ENCODE measurements at regions of chr9 and their contacts with region 1.

Region 1: DNA sequence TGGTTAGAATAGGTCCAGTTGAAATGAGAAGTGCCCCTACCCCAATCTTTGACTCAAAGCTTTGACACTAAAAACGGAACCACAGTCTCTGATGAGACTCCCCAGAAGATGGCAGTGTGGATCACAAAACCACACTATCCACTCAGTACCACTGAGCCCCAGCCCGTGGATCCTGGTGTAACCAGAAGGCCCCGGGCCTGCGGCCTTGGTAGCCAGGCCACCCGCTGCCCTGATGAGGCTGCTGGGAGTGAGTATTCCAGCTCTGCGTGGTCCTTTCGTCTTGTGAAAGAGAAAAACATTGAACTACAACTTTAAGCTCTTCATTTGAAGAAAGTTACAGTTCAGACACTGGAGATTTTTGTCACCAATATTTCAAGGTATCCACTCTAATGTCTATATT is 42.2 kb upstream of the FBP1 start:
- DNase-seq: peak; percentile 88
- H3K27ac ChIP-seq: no peak overlapping the region
- CTCF ChIP-seq: peak; percentile 94

Region 2: DNA sequence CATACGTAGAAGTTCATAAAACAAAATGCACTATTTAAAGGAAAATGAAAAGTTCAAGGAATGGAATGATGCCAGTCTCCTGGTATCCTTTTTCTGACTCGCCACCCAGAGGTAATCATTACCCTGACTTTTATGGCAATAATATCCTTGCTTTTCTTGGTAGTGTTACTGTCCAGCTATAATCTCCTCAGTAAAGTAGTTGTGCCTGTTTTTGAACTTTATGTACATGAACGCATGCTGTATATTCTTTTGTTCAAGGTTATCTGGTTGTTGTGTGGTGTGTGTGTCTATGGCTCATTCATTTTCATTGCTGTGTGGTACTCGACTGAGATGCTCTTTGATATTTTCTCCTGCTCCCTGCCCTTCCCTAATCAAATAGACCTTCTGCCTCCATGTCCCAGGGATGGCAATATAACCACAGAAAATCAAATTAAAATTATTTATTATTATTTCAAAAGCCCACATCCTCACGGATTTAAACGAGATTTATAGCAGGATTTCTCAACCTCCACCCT is 13.0 kb before region 1 on chr9:
- CTCF ChIA-PET with region 1: interaction called, 17 read pairs
- POLR2A ChIA-PET with region 1: no interaction called
- DNase-seq: no peak
- H3K27ac ChIP-seq: no peak overlapping the region
- CTCF ChIP-seq: no peak

Region 3: GRCh38 chr9:94697972-94698581 is 16.6 kb after region 1 on chr9:
- CTCF ChIA-PET with region 1: interaction called, 21 read pairs
- POLR2A ChIA-PET with region 1: no interaction called
- DNase-seq: no peak
- H3K27ac ChIP-seq: no peak overlapping the region
- CTCF ChIP-seq: no peak

Region 4: GRCh38 chr9:94726495-94727191 is 45.1 kb after region 1 on chr9 and contains the start of gene AOPEP:
- CTCF ChIA-PET with region 1: interaction called, 15 read pairs
- POLR2A ChIA-PET with region 1: no interaction called
- DNase-seq: peak; percentile 100
- H3K27ac ChIP-seq: peak within 1 kb of the TSS; percentile 69
- CTCF ChIP-seq: no peak

Region 5: DNA sequence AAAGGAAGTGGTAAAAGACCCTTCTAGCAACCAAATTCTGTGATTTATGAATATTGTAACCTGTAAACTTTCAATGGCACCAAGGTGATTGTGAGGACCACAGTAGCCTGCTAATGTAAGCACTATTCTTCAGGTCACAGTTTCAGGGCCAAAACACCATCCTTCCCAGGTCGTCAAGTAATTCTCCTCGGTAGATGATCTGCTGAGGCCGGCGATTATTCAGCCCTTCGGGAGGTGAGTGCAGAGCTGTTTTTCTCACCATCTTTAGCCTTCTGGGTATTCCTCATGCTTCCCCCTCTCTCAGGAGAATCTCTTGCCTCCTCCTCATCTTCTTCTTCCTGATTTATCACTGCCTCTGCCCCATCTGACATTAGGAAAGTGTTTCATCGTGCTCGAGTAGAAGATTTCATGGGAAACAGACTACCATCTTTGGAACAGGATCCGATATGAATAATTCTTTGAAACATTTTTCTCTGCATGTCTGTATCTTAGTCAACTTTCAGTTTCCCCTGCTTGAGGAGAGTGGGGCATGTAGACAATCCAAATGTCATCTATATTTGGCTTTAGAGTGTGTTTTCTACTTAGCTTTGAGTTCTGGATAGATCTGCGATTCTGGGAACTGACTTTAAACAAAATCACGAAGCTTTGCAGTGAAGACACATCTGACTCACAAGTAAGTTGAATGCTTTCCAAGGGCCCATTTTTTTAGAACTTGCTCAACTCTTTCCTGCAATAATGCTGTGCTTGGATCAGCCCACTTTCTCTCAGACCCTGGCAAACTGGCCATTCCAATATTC is 218.9 kb after region 1 on chr9:
- CTCF ChIA-PET with region 1: no interaction called
- POLR2A ChIA-PET with region 1: no interaction called
- DNase-seq: peak; percentile 81
- H3K27ac ChIP-seq: peak overlapping the region; percentile 91
- CTCF ChIP-seq: no peak

Region 6: GRCh38 chr9:95127249-95128176 is 446.0 kb after region 1 on chr9:
- CTCF ChIA-PET with region 1: interaction called, 132 read pairs
- POLR2A ChIA-PET with region 1: no interaction called
- DNase-seq: peak; percentile 91
- H3K27ac ChIP-seq: peak overlapping the region; percentile 58
- CTCF ChIP-seq: peak; percentile 100

Region 7: GRCh38 chr9:95167998-95168397 is 486.5 kb after region 1 on chr9:
- CTCF ChIA-PET with region 1: interaction called, 11 read pairs
- POLR2A ChIA-PET with region 1: no interaction called
- DNase-seq: peak; percentile 75
- H3K27ac ChIP-seq: no peak overlapping the region
- CTCF ChIP-seq: peak; percentile 96